AG04449 (cell line): ENCODE measurements at regions of chr16 and their contacts with region 1.

Region 1: DNA sequence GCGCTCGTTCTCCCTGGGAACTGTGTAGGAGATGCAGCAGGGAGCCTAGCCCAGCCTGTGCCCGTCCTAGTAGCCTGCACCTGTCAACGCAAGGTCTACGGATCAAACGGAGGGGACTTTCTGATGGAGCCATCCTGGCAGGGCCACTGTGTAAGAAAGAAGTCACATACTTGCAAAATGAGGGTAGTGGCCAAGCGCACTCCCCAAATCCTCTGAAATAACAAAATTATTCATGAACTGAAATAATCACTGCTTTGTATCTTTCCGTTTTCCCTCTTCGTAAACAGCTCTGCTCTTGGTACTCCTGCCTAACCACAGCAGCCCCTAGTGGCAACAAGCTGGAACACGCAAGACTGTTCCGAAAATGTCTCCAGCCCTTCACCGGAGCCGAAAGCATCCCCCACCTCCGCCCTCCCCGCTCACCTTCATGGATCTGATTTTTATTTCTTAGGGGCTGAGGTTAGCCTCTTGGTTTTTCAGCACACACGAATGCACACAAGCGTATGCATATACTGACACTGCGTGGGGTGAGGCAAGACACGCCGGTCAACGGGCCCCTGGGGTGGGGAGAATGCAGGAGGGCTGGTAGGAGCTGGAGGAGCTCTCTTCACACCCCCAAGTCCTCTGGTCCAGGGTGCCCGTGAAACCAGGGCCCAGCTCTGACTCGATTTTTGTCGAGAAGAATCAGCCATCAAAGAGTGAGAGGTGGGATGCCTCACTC is 100.8 kb downstream of the ABCC12 start:
- DNase-seq: no peak
- H3K4me3 ChIP-seq: no peak overlapping the region
- CTCF ChIP-seq: peak; percentile 91

Region 2: GRCh38 chr16:47732523-47733111 is 322.4 kb before region 1 on chr16:
- CTCF ChIA-PET with region 1: interaction called, 12 read pairs
- POLR2A ChIA-PET with region 1: no interaction called
- DNase-seq: peak; percentile 80
- H3K4me3 ChIP-seq: no peak overlapping the region; the same call in 1 of the 2 replicates
- CTCF ChIP-seq: no peak

Region 3: GRCh38 chr16:48076455-48077012 is 21.5 kb after region 1 on chr16:
- CTCF ChIA-PET with region 1: interaction called, 15 read pairs
- POLR2A ChIA-PET with region 1: no interaction called
- DNase-seq: no peak
- H3K4me3 ChIP-seq: no peak overlapping the region
- CTCF ChIP-seq: no peak

Region 4: DNA sequence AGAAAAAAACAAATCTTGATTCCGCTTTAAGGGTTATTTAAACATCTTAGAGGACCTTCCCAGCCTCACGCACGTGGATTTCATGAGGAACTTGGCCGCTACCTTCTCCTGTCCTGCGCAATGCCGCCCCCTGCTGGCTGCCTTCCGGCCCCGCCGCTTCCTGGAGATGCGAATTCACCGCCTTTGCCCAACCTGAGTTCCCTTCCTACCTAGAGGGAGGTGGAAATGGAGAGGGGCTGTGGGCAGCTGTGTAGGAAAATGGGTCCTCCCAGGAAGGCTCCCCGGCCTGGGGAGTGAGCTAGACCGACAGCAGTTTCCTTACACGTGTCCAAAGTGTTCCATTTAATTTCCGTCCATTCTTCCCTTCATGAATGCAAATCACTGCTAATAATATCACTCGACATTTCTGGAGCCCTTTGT is 101.8 kb after region 1 on chr16:
- CTCF ChIA-PET with region 1: interaction called, 10 read pairs
- POLR2A ChIA-PET with region 1: no interaction called
- DNase-seq: peak; percentile 16
- H3K4me3 ChIP-seq: no peak overlapping the region; the same call in 1 of the 2 replicates
- CTCF ChIP-seq: peak; percentile 95